Activated CD4-positive, alpha-beta memory T cell treated with anti-CD3 and anti-CD28 coated beads, Interleukin-2, amount 10 ng/mL, durations not matched to agents 7 days and 5 days (primary cell): ENCODE measurements at regions of chr17 and their contacts with region 1.

Region 1: GRCh38 chr17:18857864-18858566 is at the start of gene PRPSAP2:
- DNase-seq: peak; percentile 94
- H3K4me3 Mint-ChIP-seq: peak within 1 kb of the TSS; percentile 85
- H3K27ac Mint-ChIP-seq: peak within 1 kb of the TSS; percentile 77
- H3K4me1 Mint-ChIP-seq: peaks cover 50% of the 10 kb centered on the region
- H3K27me3 Mint-ChIP-seq: no peaks in the 10 kb centered on the region
- total RNA-seq, gene PRPSAP2: 36.0 to 36.6 TPM

Region 2: GRCh38 chr17:18896146-18896545 is 38.1 kb after region 1 on chr17:
- CTCF ChIA-PET with region 1: no interaction called
- POLR2A ChIA-PET with region 1: interaction called, 10 read pairs
- DNase-seq: no peak
- H3K4me3 Mint-ChIP-seq: no peak overlapping the region
- H3K27ac Mint-ChIP-seq: no peak overlapping the region
- H3K4me1 Mint-ChIP-seq: peaks cover 11% of the 10 kb centered on the region
- H3K27me3 Mint-ChIP-seq: peaks cover 20% of the 10 kb centered on the region

Region 3: DNA sequence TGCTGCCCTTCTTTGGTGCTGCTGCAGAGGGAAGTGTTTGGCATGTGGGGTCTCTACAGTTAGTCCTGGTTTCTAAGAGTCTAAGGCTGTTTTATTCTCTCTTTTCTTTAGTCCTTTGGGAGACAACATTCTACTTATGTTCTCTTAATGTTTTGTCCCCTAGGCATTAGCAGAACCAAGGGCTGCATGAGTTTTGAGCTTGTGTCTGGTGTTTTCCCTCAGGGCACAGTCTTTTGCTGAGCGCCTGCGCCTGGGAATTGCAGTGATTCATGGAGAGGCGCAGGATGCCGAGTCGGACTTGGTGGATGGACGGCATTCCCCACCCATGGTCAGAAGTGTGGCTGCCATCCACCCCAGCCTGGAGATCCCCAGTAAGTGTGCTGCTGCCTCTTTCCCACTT is 52.9 kb after region 1 on chr17:
- CTCF ChIA-PET with region 1: no interaction called
- POLR2A ChIA-PET with region 1: no interaction called
- DNase-seq: no peak
- H3K4me3 Mint-ChIP-seq: no peak overlapping the region
- H3K27ac Mint-ChIP-seq: no peak overlapping the region
- H3K4me1 Mint-ChIP-seq: no peaks in the 10 kb centered on the region
- H3K27me3 Mint-ChIP-seq: peaks cover 8% of the 10 kb centered on the region

Region 4: DNA sequence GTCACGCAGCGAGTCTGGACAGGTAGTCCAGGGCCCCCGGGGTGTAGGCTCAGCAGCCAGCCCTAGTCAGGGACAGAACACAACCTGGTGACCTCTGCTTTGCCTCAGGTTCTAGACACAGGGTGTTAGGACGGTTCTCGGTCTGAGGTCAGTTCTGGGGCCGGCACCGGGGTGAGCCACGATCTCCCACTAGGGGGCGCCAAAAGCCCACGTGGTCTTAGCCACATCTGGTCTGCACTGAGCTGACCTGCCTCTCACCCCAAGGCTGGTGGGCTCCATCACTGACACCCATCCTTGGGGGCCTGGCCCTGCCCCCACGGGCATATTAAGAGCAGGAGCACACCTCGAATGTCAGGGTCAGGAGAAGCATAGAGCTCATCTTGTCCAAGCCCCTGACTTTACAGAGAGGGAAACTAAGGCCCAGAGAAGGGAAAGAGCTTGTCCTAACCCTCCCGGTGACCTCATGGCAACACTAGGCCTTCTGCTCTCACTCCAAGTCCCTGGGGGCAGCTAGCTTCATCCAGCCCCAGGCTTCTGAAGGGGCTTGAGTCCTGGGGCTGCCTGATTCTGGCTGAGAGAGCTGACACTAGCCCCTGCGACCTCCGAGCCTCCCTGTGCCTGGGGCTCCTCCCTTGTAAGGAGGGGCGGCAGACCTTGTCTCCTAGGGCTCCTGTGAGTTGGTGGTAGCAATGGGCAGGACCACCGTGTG is 102.9 kb after region 1 on chr17:
- CTCF ChIA-PET with region 1: interaction called, 14 read pairs
- POLR2A ChIA-PET with region 1: no interaction called
- DNase-seq: peak; percentile 80
- H3K4me3 Mint-ChIP-seq: no peak overlapping the region
- H3K27ac Mint-ChIP-seq: no peak overlapping the region
- H3K4me1 Mint-ChIP-seq: peaks cover 6% of the 10 kb centered on the region
- H3K27me3 Mint-ChIP-seq: peaks cover 2% of the 10 kb centered on the region